AG04449 (cell line): ENCODE measurements at regions of chr11 and their contacts with region 1.

Region 1: DNA sequence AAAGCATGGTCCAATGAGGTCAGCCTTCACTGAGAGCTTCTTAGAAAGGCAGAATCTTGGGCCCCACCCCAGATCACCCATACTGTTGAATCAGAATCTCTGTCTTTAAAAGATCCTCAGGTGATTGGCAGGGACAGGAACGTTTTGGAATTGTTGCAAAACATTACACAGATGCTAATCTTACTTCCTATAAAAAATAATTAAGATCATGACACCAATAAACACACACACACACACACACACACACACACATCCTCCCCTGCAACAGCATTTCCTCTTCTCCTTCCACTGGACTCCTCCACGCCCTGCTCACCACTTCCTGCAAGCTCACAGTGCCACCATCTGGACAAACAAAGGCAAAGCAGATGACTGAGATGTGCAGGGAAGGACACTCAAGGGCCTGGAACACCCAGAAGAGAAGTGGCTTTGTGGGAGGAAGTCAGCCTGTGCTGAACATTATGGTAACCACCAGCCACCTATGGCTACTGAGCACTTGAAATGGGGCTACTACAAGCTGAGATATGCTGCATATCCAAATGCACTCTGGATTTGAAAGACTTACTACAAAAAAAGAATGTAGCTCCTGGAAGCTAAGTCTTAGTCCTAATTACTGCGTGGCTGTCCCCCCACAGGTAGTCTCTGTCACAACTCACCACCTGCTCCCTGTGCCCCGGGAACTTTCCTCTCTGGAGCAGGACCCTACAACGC is 65.6 kb downstream of the BTG4 start:
- DNase-seq: peak; percentile 54
- H3K4me3 ChIP-seq: no peak overlapping the region
- CTCF ChIP-seq: peak; percentile 96

Region 2: GRCh38 chr11:111429066-111429506 is 17.5 kb before region 1 on chr11:
- CTCF ChIA-PET with region 1: interaction called, 12 read pairs
- POLR2A ChIA-PET with region 1: no interaction called
- DNase-seq: no peak
- H3K4me3 ChIP-seq: no peak overlapping the region
- CTCF ChIP-seq: peak; percentile 48

Region 3: DNA sequence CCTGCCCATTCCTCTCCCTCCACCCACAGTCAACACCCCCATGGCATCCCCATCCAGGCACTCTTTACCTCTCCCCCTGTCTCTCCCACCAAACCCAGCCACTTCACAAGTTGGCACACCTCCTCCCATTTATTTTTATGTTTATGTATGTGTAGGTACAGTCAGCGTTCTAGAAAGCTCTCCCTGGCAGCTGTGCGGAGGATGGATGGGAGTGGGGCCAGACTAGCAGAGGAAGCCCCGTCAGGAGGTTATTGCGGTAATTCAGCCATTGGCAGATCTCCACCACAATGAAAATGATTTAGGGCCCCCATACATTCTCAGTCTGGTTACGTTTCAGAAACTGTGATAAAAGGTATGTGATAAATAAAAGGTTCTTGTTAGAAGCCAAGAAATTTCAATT is 14.3 kb after region 1 on chr11:
- CTCF ChIA-PET with region 1: interaction called, 31 read pairs
- POLR2A ChIA-PET with region 1: no interaction called
- DNase-seq: peak; percentile 2
- H3K4me3 ChIP-seq: no peak overlapping the region
- CTCF ChIP-seq: no peak